ENCODE measurements at regions of chr13 and their contacts with region 1.

Region 1: GRCh38 chr13:98445340-98446233 is 131.3 kb downstream of the STK24 start:
- DNase-seq: peak; percentile 87
- H3K4me3 Mint-ChIP-seq: peak overlapping the region; percentile 28
- H3K27ac Mint-ChIP-seq: peak overlapping the region; percentile 81
- H3K4me1 Mint-ChIP-seq: peaks cover 21% of the 10 kb centered on the region
- H3K27me3 Mint-ChIP-seq: no peaks in the 10 kb centered on the region

Region 2: GRCh38 chr13:98664924-98665637 is 219.5 kb after region 1 on chr13:
- CTCF ChIA-PET with region 1: interaction called, 11 read pairs
- DNase-seq: no peak
- H3K4me3 Mint-ChIP-seq: no peak overlapping the region
- H3K27ac Mint-ChIP-seq: no peak overlapping the region
- H3K4me1 Mint-ChIP-seq: peaks cover 2% of the 10 kb centered on the region
- H3K27me3 Mint-ChIP-seq: peaks cover 16% of the 10 kb centered on the region

Region 3: DNA sequence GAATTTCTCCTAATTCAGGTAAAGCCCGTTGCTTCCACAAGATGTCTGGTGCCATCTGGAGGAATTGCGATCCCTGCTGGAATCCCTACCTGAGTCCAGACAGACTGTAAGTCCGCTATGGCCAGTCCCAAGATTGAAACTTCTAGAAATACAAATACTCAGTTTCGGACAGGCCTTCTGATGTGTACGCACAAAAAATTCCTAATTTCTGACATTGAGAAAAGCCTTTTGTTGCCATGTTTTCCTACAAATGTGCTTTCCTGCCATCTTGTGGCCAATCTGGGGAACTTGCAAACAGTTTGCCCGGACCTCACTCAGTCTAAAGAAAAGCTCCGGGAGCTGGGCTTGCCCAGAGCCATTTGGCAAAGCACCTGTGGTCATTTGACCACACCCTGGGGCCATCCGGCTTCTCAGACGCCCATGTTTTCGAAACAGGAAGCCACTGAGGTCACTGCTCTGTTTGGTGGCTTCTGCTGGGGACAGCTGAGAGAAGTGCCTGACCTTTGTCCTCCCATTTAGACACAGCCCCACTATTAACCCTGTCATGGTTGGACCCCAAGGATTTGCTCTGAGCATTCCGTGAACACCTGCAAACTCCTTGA is 227.5 kb after region 1 on chr13:
- CTCF ChIA-PET with region 1: interaction called, 33 read pairs
- DNase-seq: peak; percentile 60
- H3K4me3 Mint-ChIP-seq: no peak overlapping the region
- H3K27ac Mint-ChIP-seq: no peak overlapping the region
- H3K4me1 Mint-ChIP-seq: no peaks in the 10 kb centered on the region
- H3K27me3 Mint-ChIP-seq: peaks cover 4% of the 10 kb centered on the region

Measured in activated naive CD4-positive, alpha-beta T cell treated with anti-CD3 and anti-CD28 coated beads, Interleukin-2, amount 10 ng/mL, durations not matched to agents 7 days and 5 days (primary cell).